ENCODE measurements at regions of chr9 and their contacts with region 1.

Region 1: GRCh38 chr9:122350638-122351355 is 20.0 kb upstream of the PTGS1 start:
- DNase-seq: peak; percentile 80 to 99 (median 90)

Region 2: GRCh38 chr9:122051351-122052321 is 299.2 kb before region 1 on chr9:
- intact Hi-C with region 1: no loop called
- DNase-seq: no peak

Region 3: DNA sequence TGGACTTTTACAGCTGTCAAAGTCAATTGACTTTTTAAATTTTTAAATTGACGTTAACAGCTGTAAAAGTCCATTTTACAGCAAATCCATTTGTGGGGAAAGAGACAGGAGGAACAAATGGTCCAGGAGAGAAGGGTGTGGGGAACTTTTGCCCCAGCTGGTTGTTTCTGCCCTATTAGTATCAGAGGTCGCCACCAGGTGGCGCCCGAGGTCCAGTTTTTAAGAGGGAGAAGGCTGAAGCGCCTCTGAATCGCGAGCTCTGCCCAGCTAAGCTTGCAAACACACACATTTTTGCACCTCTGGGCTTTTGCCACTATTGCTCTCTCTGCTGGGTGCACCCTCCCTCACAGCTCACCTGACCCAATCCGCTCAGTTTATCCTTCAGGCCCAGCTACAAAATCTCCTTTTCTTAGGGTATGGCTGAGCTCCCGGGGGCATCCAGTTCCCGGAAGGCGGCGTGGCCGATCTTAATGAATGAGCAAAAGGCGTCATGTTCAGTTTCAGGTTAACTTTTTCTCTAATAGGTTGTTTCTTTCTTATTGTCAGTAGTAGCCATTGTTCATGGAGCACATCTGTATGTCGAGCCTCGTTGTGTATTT is 251.4 kb before region 1 on chr9:
- intact Hi-C with region 1: loop called (anchors 1 kb)
- DNase-seq: peak; percentile 64 to 97 (median 88)

Region 4: GRCh38 chr9:122264360-122265148 is 86.2 kb before region 1 on chr9 and contains the starts of genes MRRF and RBM18:
- intact Hi-C with region 1: loop called (anchors 5 kb)
- DNase-seq: peak; percentile 83 to 98 (median 88)

Region 5: DNA sequence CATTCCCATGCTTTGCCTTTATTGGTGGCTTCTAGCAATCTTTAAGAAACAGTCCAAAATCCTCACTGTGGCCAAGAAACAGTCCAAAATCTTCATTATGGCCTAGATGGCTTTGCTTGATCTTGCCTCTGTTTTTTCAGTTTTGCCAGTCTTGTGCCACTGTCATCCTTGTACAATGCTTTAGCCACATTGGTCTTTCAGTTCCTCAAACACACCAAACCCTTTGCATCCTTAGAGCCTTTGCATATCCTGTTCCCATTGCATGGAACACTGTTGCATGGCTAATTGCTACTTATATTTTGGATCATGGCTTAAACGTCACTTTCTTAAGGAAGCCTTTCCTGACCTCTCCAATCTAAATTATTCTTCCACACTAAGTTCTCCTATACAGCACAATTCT is 64.0 kb before region 1 on chr9:
- intact Hi-C with region 1: no loop called
- DNase-seq: no peak